ENCODE measurements at regions of chr15 and their contacts with region 1.

Region 1: DNA sequence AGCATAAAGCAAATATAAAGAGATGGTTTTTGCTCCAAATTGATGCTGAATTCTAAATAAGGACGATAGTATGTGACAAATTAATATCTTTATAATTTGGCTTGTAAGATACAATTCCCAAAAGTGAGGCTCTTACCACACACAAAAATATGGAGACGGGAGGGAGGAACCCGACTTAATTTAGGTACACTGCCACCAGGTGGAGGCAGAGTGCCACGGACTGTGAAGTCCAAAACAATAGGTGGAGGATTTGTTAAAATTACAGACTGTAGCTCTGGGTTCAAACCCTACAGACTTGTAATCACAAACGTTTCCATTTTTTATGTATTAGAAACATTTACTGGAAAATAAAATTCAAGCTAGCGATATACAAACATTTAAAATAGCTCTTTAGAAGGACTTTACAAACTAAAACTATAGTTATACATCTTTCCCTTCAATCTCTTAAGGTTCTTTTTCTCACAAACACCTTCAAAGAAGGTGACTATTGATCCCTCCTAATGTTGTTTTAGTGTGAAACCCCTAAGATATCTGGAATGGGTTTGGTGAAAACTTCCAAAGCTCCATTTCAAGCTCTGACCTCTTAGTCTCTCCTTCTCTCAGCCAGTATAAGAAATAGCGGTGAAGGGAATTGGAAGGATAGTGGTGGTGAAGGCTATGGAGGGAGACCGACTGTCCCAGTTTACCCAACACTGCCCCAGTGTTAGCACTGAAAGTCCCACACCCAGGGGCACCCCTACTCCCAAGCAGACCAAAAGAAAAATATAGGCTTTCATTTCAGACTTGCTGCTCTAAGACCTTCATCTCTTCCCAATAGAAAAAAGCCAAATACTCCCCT is 89.7 kb downstream of the AQP9 start:
- DNase-seq: peak; percentile 85
- ATAC-seq: peak; percentile 75
- H3K4me3 Mint-ChIP-seq: no peak overlapping the region
- H3K27ac Mint-ChIP-seq: no peak overlapping the region
- H3K4me1 Mint-ChIP-seq: peaks cover 8% of the 10 kb centered on the region
- H3K27me3 Mint-ChIP-seq: peaks cover 5% of the 10 kb centered on the region
- CTCF ChIP-seq: peak; percentile 95

Region 2: DNA sequence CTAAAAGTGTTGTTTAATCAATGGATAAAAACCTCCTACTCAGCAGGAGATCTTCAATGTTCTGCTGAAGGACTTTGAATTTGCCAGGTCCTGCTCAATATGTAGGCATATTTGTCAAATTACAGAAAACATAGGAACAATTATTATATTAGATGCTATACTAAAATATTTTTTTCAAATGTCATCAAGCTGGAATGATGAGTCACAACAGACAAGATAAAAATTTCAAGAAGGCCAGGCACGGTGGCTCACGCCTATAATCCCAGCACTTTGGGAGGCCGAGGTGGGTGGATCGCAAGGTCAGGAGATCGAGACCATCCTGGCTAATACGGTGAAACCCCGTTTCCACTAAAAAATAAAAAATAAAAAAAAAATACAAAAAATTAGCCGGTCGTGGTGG is 21.8 kb before region 1 on chr15:
- CTCF ChIA-PET with region 1: no interaction called
- POLR2A ChIA-PET with region 1: no interaction called
- intact Hi-C with region 1: no loop called
- DNase-seq: no peak
- ATAC-seq: no peak
- H3K4me3 Mint-ChIP-seq: no peak overlapping the region
- H3K27ac Mint-ChIP-seq: no peak overlapping the region
- H3K4me1 Mint-ChIP-seq: no peaks in the 10 kb centered on the region
- H3K27me3 Mint-ChIP-seq: peaks cover 2% of the 10 kb centered on the region
- CTCF ChIP-seq: no peak

Region 3: DNA sequence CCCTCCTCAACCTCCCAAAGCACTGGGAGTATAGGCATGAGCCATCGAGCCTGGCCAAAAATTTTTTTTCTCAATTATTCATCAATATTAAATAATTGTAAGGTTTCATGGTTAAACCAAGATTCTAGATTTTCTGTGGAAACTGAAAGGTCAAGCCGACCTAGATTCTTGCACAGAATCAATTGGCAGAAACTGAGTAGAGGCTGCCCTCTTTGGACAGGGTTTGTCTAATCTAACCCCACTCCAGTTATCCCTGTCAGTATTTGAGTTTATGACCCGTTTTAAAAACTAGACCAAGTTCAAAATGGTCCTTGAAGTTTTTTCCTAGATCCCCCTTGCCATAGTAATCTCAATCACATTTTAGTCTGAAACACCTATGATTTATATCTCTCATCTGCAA is 530.2 kb after region 1 on chr15:
- CTCF ChIA-PET with region 1: interaction called, 6 read pairs
- POLR2A ChIA-PET with region 1: no interaction called
- intact Hi-C with region 1: loop called (anchors 5 kb)
- DNase-seq: no peak
- ATAC-seq: no peak
- H3K4me3 Mint-ChIP-seq: no peak overlapping the region
- H3K27ac Mint-ChIP-seq: no peak overlapping the region
- H3K4me1 Mint-ChIP-seq: peaks cover 5% of the 10 kb centered on the region
- H3K27me3 Mint-ChIP-seq: no peaks in the 10 kb centered on the region
- CTCF ChIP-seq: no peak

Region 4: DNA sequence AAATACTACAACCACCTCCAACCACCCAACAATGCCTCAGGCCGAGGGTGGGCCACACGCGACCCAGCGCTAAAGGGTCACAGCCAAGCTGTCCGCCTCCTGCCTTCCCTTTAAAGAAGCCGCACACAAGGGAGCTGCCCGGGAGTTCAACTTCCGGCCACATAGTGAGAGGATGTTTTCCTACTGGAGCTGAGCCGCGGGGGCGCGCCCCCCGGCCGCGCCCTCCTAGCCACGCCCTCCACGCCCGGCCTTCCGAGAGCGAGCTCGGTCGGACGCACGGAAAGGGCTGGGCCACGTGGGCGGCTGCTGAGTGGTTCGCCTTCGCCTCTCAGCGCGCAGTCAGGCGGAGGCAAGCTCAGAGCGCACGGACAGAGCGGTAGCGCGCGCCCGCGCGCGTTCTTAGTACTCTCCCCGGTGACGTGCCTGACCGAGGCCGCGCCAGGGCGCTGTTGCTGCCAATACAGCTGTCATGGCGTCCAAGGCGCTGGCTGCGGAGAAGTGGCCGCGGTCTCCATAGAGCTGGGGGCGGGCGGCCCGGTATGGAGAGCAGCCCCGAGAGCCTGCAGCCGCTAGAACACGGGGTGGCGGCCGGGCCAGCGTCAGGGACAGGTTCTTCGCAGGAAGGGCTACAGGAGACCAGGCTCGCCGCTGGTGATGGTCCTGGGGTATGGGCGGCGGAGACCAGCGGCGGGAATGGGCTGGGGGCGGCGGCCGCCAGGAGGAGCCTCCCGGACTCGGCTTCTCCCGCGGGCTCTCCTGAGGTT is 543.1 kb after region 1 on chr15 and contains the start of gene MINDY2:
- CTCF ChIA-PET with region 1: interaction called, 15 read pairs
- POLR2A ChIA-PET with region 1: no interaction called
- intact Hi-C with region 1: no loop called
- DNase-seq: peak; percentile 97
- ATAC-seq: peak; percentile 97
- H3K4me3 Mint-ChIP-seq: no peak within 1 kb of the TSS
- H3K27ac Mint-ChIP-seq: peak within 1 kb of the TSS; percentile 87
- H3K4me1 Mint-ChIP-seq: peaks cover 15% of the 10 kb centered on the region
- H3K27me3 Mint-ChIP-seq: no peaks in the 10 kb centered on the region
- CTCF ChIP-seq: peak; percentile 28
- total RNA-seq, gene MINDY2: 9.0 to 10.3 TPM